Posterior cingulate gyrus (tissue), 11 donors: ENCODE measurements at regions of chr1 and their contacts with region 1.

Region 1: GRCh38 chr1:182604169-182605164 is at the start of gene RGS16:
- DNase-seq: peak; percentile 84 to 99 (median 92)

Region 2: GRCh38 chr1:182084487-182085316 is 519.8 kb before region 1 on chr1:
- intact Hi-C with region 1: loop called (anchors 10 kb)
- DNase-seq: peak; percentile 77 to 98 (median 92)

Region 3: DNA sequence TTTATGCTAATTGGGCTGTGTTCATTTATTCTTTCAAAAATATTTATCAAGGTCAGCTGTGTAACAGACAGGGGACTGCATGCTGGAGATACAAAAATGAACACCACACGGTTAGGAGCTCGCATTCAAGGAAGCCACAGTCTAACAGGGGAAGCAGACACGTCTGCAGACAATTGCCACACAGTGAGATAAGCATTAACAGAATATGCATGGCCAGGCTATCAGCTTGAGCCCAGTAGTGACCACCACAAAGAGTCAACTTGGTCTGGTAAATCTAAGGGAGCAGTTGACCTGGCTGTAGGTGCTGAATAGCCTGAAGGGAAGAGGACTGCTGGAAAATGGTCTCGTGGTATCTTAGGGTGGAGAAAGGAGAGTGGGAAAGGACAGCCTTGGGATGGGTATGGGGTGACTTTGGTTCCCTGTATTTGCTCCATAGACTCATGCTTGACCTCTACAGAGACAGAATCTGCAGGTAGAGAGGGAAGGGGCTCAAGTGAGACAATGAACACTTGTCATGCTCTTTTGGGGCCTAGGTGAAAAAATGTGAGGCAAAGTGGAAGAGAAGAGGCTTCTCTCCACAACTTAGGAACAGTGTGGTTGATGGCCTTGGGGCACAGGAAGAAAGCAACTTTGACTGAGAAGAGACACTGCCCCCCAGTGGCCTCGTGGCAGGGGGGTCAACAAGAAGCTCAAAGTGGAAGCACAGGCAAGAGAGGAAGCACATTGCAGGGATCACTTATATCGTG is 177.5 kb after region 1 on chr1:
- intact Hi-C with region 1: loop called (anchors 1 kb)
- DNase-seq: peak; percentile 23 to 95 (median 71)

Region 4: DNA sequence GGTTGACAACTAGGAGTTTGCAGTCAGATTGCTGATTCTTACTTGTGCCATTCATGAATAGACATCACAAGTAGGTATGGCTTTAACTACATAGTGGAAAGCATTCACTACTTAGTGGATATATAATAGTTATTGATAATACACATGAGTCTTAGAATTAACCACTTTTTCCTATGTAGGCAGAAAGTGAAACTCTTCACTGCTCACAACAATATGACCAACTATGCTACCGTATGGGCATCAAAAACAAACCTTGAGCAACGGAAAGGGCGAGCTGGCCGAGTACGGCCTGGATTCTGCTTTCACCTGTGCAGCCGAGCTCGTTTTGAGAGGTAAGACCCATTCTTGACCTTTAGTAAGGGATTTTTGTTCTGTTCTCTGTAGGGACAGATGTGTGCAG is 273.4 kb after region 1 on chr1:
- intact Hi-C with region 1: no loop called
- DNase-seq: no peak